Sigmoid colon (tissue), 7 donors: ENCODE measurements at regions of chr10 and their contacts with region 1.

Region 1: DNA sequence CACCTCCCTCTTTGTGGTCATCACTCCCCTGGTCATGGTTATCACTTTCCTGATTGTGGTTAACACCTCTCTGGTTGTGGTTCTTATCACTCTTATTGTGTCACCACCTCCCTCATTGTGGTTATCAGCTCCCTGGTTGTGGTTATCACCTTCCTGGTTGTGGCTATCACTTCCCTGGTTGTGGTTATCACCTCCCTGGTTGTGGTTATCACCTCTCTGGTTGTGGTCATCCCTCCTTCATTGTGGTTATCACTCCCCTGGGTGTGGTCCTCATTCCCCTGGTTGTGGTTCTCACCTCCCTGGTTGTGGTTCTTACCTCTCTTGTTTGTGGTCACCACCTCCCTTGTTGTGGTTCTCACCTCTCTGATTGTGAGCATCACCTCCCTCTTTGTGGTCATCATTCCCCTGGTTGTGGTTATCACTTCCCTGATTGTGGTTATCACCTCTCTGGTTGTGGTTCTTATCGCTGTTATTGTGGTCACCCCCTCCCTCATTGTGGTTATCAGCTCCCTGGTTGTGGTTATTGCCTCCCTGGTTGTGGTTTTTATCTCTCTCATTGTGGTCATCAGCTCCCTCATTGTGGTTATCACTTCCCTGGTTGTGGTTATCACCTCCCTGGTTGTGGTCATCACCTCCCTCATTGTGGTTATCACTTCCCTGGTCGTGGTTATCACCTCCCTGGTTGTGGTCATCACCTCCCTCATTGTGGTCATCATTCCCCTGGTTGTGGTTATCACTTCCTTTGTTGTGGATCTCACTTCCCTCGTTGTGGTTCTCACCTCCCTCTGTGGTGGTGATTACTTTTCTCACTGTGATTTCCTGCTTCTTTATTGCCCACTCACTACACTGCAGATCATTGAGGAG is 106.7 kb downstream of the GPR26 start:
- DNase-seq: peak; percentile 12
- H3K4me3 ChIP-seq: no peak overlapping the region
- H3K27ac ChIP-seq: peak overlapping the region in 1 of 4 donors; percentile 1
- H3K4me1 ChIP-seq: peaks cover 0 to 21% (median 15%) of the 10 kb centered on the region in 4 donors
- H3K27me3 ChIP-seq: no peaks in the 10 kb centered on the region
- CTCF ChIP-seq: no peak
- EP300 ChIP-seq: no peak
- POLR2A ChIP-seq: no peak

Region 2: GRCh38 chr10:123868038-123869019 is 95.5 kb after region 1 on chr10:
- intact Hi-C with region 1: loop called (anchors 10 kb)
- DNase-seq: no peak
- H3K4me3 ChIP-seq: no peak overlapping the region
- H3K27ac ChIP-seq: peak overlapping the region; percentile 91 to 97 (median 97)
- H3K4me1 ChIP-seq: peaks cover 0 to 78% (median 71%) of the 10 kb centered on the region in 4 donors
- H3K27me3 ChIP-seq: no peaks in the 10 kb centered on the region
- CTCF ChIP-seq: no peak
- EP300 ChIP-seq: no peak
- POLR2A ChIP-seq: no peak

Region 3: GRCh38 chr10:123891133-123892071 is 118.5 kb after region 1 on chr10 and contains the start of gene CPXM2:
- intact Hi-C with region 1: loop called (anchors 5 kb)
- DNase-seq: no peak
- H3K4me3 ChIP-seq: peak within 1 kb of the TSS; percentile 64 to 87 (median 84)
- H3K27ac ChIP-seq: peak within 1 kb of the TSS; percentile 96 to 99 (median 98)
- H3K4me1 ChIP-seq: peaks cover 2 to 72% (median 56%) of the 10 kb centered on the region in 4 donors
- H3K27me3 ChIP-seq: peaks cover 0 to 6% (median 0%) of the 10 kb centered on the region in 3 donors
- CTCF ChIP-seq: no peak
- EP300 ChIP-seq: no peak
- POLR2A ChIP-seq: peak in 1 of 2 donors; percentile 24
- total RNA-seq, gene CPXM2: 48.5 to 153 (median 106) TPM

Region 4: DNA sequence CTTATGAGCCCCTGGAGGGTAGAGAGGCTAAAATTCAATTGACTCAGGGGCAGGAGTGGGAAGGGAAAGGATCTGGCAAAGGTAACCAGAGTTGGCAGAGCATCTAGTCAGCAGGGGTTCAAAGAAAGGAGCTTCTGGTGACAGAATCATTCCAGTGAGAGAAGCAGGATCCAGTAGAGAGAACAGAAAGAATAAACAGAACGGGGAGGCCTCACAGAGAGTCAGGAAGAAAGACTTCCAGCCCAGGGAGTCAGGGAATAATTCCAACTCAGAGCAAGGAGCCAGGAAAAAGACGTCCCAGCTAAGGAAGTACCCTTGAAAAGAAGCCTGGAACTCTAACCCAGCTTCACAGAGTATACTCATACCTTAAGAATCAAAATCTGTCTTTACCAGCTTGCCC is 185.4 kb after region 1 on chr10:
- intact Hi-C with region 1: loop called (anchors 2 kb)
- DNase-seq: no peak
- H3K4me3 ChIP-seq: no peak overlapping the region
- H3K27ac ChIP-seq: peak overlapping the region; percentile 50 to 85 (median 76)
- H3K4me1 ChIP-seq: peaks cover 0 to 31% (median 25%) of the 10 kb centered on the region in 4 donors
- H3K27me3 ChIP-seq: no peaks in the 10 kb centered on the region
- CTCF ChIP-seq: no peak
- EP300 ChIP-seq: peak in 3 of 4 donors; percentile 31 to 40 (median 38)
- POLR2A ChIP-seq: no peak